ENCODE measurements at regions of chr2 and their contacts with region 1.

Region 1: GRCh38 chr2:20486571-20486970 is 39.7 kb downstream of the RHOB start:
- DNase-seq: no peak
- H3K4me3 ChIP-seq: no peak overlapping the region
- H3K27ac ChIP-seq: no peak overlapping the region
- H3K4me1 ChIP-seq: no peaks in the 10 kb centered on the region
- CTCF ChIP-seq: no peak

Region 2: GRCh38 chr2:20447437-20448245 is 38.9 kb before region 1 on chr2:
- CTCF ChIA-PET with region 1: no interaction called
- POLR2A ChIA-PET with region 1: no interaction called
- intact Hi-C with region 1: no loop called
- DNase-seq: no peak
- H3K4me3 ChIP-seq: no peak overlapping the region
- H3K27ac ChIP-seq: no peak overlapping the region
- H3K4me1 ChIP-seq: peaks cover 3% of the 10 kb centered on the region
- CTCF ChIP-seq: no peak

Region 3: DNA sequence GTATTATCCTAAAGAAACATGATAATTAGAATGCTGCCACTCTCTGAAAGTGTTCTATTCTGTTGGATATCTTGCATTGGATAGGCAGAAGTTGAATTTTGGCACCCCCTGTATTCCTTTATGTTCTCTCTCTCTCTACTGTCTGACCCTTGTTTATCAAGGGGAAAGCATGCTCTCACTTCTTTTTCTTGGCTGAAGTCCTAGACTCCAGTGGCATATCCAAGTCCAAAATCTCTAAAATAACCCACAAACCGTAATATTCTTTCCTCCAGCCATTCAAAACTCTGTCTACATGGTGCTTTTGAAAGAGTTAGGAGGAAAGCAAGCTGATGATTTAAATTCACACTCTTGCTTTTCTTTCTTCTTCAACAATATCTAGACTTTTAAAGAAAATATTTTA is 1306.9 kb after region 1 on chr2:
- CTCF ChIA-PET with region 1: no interaction called
- POLR2A ChIA-PET with region 1: interaction called, 10 read pairs
- intact Hi-C with region 1: no loop called
- DNase-seq: no peak
- H3K4me3 ChIP-seq: no peak overlapping the region
- H3K27ac ChIP-seq: no peak overlapping the region
- H3K4me1 ChIP-seq: no peaks in the 10 kb centered on the region
- CTCF ChIP-seq: no peak